ENCODE measurements at regions of chr17 and their contacts with region 1.

Region 1: GRCh38 chr17:59521204-59522126 is 43.9 kb upstream of the DHX40 start:
- DNase-seq: peak; percentile 75 to 88
- ATAC-seq: peak; percentile 95 to 97
- H3K4me3 ChIP-seq: no peak overlapping the region
- H3K27ac ChIP-seq: peak overlapping the region; percentile 48 to 74; a peak in 5 of 6 replicates
- H3K4me1 ChIP-seq: peaks cover 5% of the 10 kb centered on the region
- CTCF ChIP-seq: peak; percentile 94
- EP300 ChIP-seq: no peak
- POLR2A ChIP-seq: no peak
- RAD21 ChIP-seq: peak; percentile 83 to 88

Region 2: GRCh38 chr17:59355696-59356325 is 165.7 kb before region 1 on chr17:
- CTCF ChIA-PET with region 1: no interaction called
- POLR2A ChIA-PET with region 1: no interaction called
- DNase-seq: no peak
- ATAC-seq: no peak
- H3K4me3 ChIP-seq: no peak overlapping the region
- H3K27ac ChIP-seq: no peak overlapping the region
- H3K4me1 ChIP-seq: no peaks in the 10 kb centered on the region
- CTCF ChIP-seq: no peak
- EP300 ChIP-seq: no peak
- POLR2A ChIP-seq: no peak
- RAD21 ChIP-seq: no peak

Region 3: DNA sequence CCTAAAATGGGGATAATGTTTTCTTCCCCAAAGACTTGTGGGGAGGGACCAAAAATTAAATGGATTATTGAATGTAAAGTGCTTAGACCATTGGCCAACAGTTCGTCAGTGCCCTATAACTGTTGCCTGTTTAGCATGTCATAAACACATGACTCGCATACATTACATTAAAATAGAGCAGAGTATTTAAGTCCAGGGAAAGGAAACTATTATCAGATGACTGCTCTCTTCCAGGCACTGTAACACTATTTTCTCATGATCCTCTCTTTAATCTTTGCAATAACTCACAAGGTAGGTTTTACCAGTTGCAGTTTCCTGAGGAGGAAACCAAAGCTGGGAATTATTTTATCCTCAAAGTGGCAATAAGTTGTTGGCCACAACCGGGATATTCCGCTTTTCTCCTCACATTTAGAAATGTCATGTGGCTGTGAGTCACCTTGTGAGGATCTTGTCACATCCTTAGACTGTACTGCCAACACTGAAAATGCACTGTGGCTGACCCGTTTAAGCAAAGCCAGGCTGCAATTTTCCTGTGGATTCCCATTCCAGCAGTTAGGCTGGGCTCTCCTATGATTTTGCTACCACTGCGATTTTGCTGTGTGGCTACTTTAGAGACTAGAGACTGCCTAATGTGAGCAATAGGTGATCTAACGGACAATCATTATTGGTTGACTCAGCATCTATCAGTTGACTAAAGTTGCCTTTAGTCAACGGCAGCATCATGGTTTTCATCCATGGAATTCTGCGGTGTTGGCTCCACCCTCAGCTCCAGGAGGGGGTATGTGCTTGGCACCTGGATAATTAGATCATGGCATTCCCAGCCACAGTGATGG is 14.4 kb before region 1 on chr17:
- CTCF ChIA-PET with region 1: interaction called, 43 read pairs
- POLR2A ChIA-PET with region 1: interaction called, 9 read pairs
- DNase-seq: no peak
- ATAC-seq: no peak
- H3K4me3 ChIP-seq: no peak overlapping the region
- H3K27ac ChIP-seq: no peak overlapping the region
- H3K4me1 ChIP-seq: no peaks in the 10 kb centered on the region
- CTCF ChIP-seq: no peak
- EP300 ChIP-seq: no peak
- POLR2A ChIP-seq: no peak
- RAD21 ChIP-seq: no peak

Region 4: DNA sequence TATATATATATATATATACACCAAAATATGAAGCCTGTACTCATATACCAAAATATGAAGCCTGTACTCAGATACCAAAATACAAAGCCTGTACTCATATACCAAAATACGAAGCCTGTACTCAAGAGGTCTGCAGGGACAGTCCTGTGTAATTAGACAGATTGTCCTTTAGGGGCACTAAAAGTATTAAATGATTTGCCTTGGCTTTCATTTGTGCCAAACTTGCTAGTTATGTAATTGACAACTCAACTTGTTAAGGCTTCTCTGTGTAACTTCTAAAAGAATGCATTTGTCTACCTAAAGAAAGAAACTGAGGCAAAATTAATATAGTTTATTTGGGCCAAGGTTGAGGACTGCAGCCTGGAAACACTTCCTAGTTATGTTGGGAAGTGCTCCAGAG is 13.1 kb after region 1 on chr17:
- CTCF ChIA-PET with region 1: interaction called, 34 read pairs
- POLR2A ChIA-PET with region 1: no interaction called
- DNase-seq: peak; percentile 43 to 56
- ATAC-seq: peak; percentile 71 to 72; a peak in 5 of 6 replicates
- H3K4me3 ChIP-seq: no peak overlapping the region
- H3K27ac ChIP-seq: no peak overlapping the region
- H3K4me1 ChIP-seq: no peaks in the 10 kb centered on the region
- CTCF ChIP-seq: peak; percentile 16; the same call in 1 of the 3 replicates
- EP300 ChIP-seq: no peak
- POLR2A ChIP-seq: no peak
- RAD21 ChIP-seq: no peak

Region 5: GRCh38 chr17:59542960-59543635 is 21.6 kb after region 1 on chr17:
- CTCF ChIA-PET with region 1: interaction called, 12 read pairs
- POLR2A ChIA-PET with region 1: no interaction called
- DNase-seq: no peak
- ATAC-seq: no peak; a peak in 1 of 6 replicates
- H3K4me3 ChIP-seq: no peak overlapping the region
- H3K27ac ChIP-seq: no peak overlapping the region
- H3K4me1 ChIP-seq: no peaks in the 10 kb centered on the region
- CTCF ChIP-seq: no peak
- EP300 ChIP-seq: no peak
- POLR2A ChIP-seq: no peak
- RAD21 ChIP-seq: no peak

Region 6: GRCh38 chr17:59558977-59559376 is 37.5 kb after region 1 on chr17:
- CTCF ChIA-PET with region 1: interaction called, 15 read pairs
- POLR2A ChIA-PET with region 1: no interaction called
- DNase-seq: no peak
- ATAC-seq: no peak
- H3K4me3 ChIP-seq: no peak overlapping the region
- H3K27ac ChIP-seq: no peak overlapping the region
- H3K4me1 ChIP-seq: no peaks in the 10 kb centered on the region
- CTCF ChIP-seq: peak; percentile 44; the same call in 2 of the 3 replicates
- EP300 ChIP-seq: no peak
- POLR2A ChIP-seq: no peak
- RAD21 ChIP-seq: peak; percentile 48 to 55; a peak in 3 of 5 replicates

Region 7: DNA sequence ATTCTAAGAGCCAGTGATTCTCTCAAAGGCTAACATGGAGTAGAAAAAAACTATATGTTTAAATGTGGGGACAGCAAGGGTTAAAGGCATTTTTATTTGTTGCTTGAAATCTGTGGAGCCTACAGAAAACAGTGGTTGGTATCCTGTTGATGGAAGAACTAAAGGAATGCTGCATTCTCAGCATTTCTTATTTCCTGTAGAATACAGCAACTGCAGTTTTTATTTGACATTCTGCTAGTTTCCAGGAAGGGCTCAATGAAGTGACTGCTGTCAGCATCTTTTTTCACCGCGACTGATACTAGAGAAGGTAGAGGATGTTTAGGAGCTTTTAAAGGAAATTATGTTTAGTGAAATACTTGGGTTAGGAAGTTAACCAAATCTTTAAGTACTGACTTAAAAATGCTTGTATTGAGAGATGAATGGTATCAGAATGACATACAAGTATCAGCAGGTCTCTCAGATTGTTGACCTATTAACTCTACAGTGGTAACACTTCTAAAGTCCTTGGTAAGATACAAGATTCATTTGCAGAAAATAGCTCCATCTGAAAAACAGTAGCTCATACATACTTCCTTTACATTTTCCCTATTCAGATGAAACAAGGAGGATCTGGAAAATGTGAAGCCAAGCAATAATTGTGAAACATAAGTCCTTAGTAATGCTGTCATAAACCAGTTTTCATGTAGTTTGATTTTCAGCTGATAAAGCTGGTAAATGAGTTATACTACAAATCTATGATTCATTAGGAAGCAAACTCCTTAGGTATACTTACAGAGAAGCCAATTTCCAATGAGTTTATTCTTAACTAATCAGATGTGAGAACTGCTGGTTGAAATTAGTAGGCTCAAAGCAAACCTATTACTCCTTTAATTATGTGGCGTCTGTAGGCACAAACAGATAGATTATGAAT is 113.4 kb after region 1 on chr17:
- CTCF ChIA-PET with region 1: no interaction called
- POLR2A ChIA-PET with region 1: no interaction called
- DNase-seq: no peak
- ATAC-seq: 0 out of 6 replicates have a peak, but pooled peaks of 1 of the 2 experiments have one; percentile 22
- H3K4me3 ChIP-seq: no peak overlapping the region
- H3K27ac ChIP-seq: no peak overlapping the region
- H3K4me1 ChIP-seq: peaks cover 42% of the 10 kb centered on the region; the same call in 2 of the 3 replicates
- CTCF ChIP-seq: no peak
- EP300 ChIP-seq: no peak
- POLR2A ChIP-seq: no peak
- RAD21 ChIP-seq: no peak

Region 8: DNA sequence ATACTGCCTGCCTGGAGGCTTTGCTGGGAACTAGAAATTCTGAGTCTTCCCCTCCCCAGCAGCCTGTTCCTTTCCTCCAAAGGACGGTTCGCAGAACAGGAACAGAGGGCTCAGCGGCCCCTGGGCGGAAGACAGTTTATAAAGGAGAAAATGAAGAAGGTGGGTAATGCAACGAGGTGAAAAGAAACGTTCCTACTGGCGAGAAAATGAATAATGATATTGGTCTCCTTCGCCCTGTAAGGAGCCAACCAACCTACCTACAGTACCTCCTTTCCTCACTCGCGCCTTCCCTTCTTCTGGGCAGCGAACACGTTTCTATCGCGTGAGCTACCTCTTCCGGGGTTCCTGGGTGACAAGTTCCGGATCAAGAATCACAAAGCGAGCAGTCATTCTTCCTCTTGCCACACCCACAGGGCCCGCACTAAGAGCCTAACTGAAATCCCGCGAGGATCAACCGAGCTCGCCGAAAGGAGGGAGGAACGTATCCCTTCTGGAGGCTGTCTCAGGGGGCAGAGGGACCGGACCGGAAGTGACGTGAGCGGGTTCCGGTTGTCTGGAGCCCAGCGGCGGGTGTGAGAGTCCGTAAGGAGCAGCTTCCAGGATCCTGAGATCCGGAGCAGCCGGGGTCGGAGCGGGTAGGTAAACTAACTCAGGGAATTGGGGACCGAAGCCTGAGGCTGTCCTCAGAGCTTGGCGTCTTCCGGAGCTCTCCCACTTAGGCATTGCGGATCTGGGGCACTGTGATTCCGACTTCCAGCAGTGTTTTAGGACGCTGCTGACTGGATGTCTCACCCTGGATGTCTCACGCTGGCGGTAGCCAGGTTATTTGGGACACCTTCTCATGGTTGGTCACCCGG is 185.9 kb after region 1 on chr17 and contains the starts of genes PTRH2 and VMP1:
- CTCF ChIA-PET with region 1: no interaction called
- POLR2A ChIA-PET with region 1: no interaction called
- DNase-seq: peak; percentile 100
- ATAC-seq: peak; percentile 97 to 98
- H3K4me3 ChIP-seq: peak within 1 kb of the TSS; percentile 68
- H3K27ac ChIP-seq: peak within 1 kb of the TSS; percentile 87 to 92
- H3K4me1 ChIP-seq: peaks cover 44% of the 10 kb centered on the region
- CTCF ChIP-seq: no peak
- EP300 ChIP-seq: no peak
- POLR2A ChIP-seq: peak; percentile 68
- RAD21 ChIP-seq: 0 out of 5 replicates have a peak, but pooled peaks of 1 of the 2 experiments have one; percentile 2
- polyA plus RNA-seq, gene PTRH2: 169 and 171 TPM in 2 replicates
- polyA plus RNA-seq, gene VMP1: 638 and 726 TPM in 2 replicates

Measured in A549 (cell line).